ENCODE measurements at regions of chr4 and their contacts with region 1.

Region 1: GRCh38 chr4:1726146-1726934 is 5.0 kb downstream of the TACC3 start:
- DNase-seq: peak; percentile 78

Region 2: DNA sequence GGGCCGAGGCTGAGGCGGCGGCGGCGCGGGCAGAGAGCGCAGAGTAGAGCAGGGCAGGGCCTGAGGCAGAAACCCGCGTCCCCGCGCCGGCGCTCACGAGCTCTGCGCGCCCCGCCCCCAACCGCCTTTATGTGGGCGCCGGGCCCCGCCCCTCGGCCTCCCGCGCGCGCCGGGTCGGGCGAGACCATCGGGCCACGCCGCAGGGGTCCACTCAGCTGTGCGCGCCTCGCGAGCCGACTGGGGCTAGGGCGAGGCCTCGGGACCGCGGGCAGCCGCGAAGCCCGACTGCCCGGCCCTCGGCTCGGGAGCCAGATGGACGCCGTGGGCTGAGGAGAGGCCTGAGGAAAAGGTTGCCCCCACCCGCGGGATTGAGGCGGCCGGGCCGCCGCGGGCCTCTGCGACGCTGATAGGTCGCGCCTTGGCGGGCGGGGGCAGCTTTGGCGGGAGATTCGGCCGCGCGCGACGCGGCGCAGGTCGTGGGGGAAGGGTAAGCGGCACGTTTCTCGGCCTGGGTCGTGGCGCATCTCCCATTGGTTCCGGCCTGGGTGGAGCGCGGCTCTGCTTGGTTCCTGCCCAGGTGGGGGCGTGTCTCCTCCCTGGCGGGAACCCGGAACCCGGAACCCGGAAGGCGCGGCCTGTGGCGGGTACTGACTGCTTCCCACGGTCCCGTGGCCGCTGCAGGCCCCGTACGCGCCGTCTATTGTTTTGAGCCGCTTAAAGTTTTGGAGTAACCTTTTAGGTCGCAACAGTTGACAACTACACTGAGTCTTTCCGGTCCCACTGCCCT is 13.9 kb before region 1 on chr4 and contains the start of gene SLBP:
- CTCF ChIA-PET with region 1: interaction called, 5 read pairs
- POLR2A ChIA-PET with region 1: interaction called, 80 read pairs
- DNase-seq: peak; percentile 94

Region 3: DNA sequence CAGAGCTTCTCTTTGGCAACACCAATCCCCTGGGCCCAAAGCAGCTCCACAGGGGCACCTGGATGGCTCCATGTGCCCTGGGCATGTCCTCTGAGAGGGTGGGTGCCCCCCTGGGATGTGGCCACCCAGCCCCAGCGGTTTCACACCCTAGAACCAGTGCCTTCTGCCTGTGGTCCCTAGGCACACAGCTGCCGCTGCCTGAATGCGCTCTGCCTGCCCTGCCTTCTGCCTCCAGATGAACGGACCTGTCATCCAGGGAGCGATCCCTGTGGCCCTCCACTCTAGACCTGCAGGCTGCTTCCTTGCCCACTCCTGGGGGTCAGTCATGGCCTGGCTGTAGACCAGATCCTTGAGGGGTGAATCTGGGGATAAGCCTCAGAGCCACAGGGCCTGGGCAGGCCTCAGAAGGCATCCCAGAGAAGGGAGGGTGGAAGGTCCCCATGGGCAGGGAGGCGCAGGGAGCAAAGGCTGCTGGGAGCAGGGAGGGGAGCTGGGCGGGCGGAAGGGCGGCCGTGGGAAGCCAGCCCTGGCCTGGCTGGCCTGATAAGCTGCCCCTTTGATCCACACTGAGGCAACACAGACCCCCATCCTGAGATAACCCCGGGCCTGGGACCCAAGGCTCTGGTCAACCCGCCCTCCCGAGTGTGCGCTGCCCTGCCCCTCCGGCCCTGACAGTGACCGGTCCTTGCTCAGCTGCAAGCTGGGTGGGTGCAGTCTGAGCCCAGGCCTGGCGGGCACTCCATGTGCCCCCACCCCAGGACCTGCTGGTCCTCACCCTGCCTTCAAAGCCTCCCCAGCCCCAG is 58.6 kb after region 1 on chr4:
- CTCF ChIA-PET with region 1: no interaction called
- POLR2A ChIA-PET with region 1: no interaction called
- DNase-seq: no peak